Activated CD4-positive, alpha-beta memory T cell treated with anti-CD3 and anti-CD28 coated beads, Interleukin-2, amount 10 ng/mL, durations not matched to agents 7 days and 5 days (primary cell): ENCODE measurements at regions of chr13 and their contacts with region 1.

Region 1: GRCh38 chr13:98570929-98571372 is 6.0 kb downstream of the STK24 start:
- DNase-seq: peak; percentile 63
- H3K4me3 Mint-ChIP-seq: peak overlapping the region; percentile 81
- H3K27ac Mint-ChIP-seq: peak overlapping the region; percentile 95
- H3K4me1 Mint-ChIP-seq: peaks cover 87% of the 10 kb centered on the region
- H3K27me3 Mint-ChIP-seq: no peaks in the 10 kb centered on the region

Region 2: GRCh38 chr13:98476538-98476966 is 94.4 kb before region 1 on chr13:
- CTCF ChIA-PET with region 1: interaction called, 3 read pairs
- POLR2A ChIA-PET with region 1: interaction called, 15 read pairs
- DNase-seq: peak; percentile 94
- H3K4me3 Mint-ChIP-seq: peak overlapping the region; percentile 49
- H3K27ac Mint-ChIP-seq: peak overlapping the region; percentile 83
- H3K4me1 Mint-ChIP-seq: peaks cover 81% of the 10 kb centered on the region
- H3K27me3 Mint-ChIP-seq: no peaks in the 10 kb centered on the region

Region 3: GRCh38 chr13:98509271-98510155 is 61.4 kb before region 1 on chr13:
- CTCF ChIA-PET with region 1: interaction called, 3 read pairs
- POLR2A ChIA-PET with region 1: interaction called, 18 read pairs
- DNase-seq: peak; percentile 69
- H3K4me3 Mint-ChIP-seq: peak overlapping the region; percentile 1
- H3K27ac Mint-ChIP-seq: peak overlapping the region; percentile 87
- H3K4me1 Mint-ChIP-seq: peaks cover 91% of the 10 kb centered on the region
- H3K27me3 Mint-ChIP-seq: no peaks in the 10 kb centered on the region

Region 4: GRCh38 chr13:98517576-98518310 is 53.2 kb before region 1 on chr13:
- CTCF ChIA-PET with region 1: interaction called, 3 read pairs
- POLR2A ChIA-PET with region 1: interaction called, 13 read pairs
- DNase-seq: peak; percentile 62
- H3K4me3 Mint-ChIP-seq: peak overlapping the region; percentile 20
- H3K27ac Mint-ChIP-seq: peak overlapping the region; percentile 75
- H3K4me1 Mint-ChIP-seq: peaks cover 96% of the 10 kb centered on the region
- H3K27me3 Mint-ChIP-seq: no peaks in the 10 kb centered on the region

Region 5: GRCh38 chr13:98549006-98549727 is 21.8 kb before region 1 on chr13:
- CTCF ChIA-PET with region 1: no interaction called
- POLR2A ChIA-PET with region 1: interaction called, 10 read pairs
- DNase-seq: no peak
- H3K4me3 Mint-ChIP-seq: no peak overlapping the region
- H3K27ac Mint-ChIP-seq: peak overlapping the region; percentile 40
- H3K4me1 Mint-ChIP-seq: peaks cover 81% of the 10 kb centered on the region
- H3K27me3 Mint-ChIP-seq: no peaks in the 10 kb centered on the region

Region 6: GRCh38 chr13:98556968-98557631 is 13.9 kb before region 1 on chr13:
- CTCF ChIA-PET with region 1: interaction called, 6 read pairs
- POLR2A ChIA-PET with region 1: interaction called, 26 read pairs
- DNase-seq: no peak
- H3K4me3 Mint-ChIP-seq: peak overlapping the region; percentile 4
- H3K27ac Mint-ChIP-seq: peak overlapping the region; percentile 68
- H3K4me1 Mint-ChIP-seq: peaks cover 76% of the 10 kb centered on the region
- H3K27me3 Mint-ChIP-seq: no peaks in the 10 kb centered on the region

Region 7: GRCh38 chr13:98772794-98773452 is 202.0 kb after region 1 on chr13:
- CTCF ChIA-PET with region 1: no interaction called
- POLR2A ChIA-PET with region 1: no interaction called
- DNase-seq: no peak
- H3K4me3 Mint-ChIP-seq: no peak overlapping the region
- H3K27ac Mint-ChIP-seq: no peak overlapping the region
- H3K4me1 Mint-ChIP-seq: no peaks in the 10 kb centered on the region
- H3K27me3 Mint-ChIP-seq: peaks cover 6% of the 10 kb centered on the region

Region 8: GRCh38 chr13:99694212-99694611 is 1123.3 kb after region 1 on chr13:
- CTCF ChIA-PET with region 1: no interaction called
- POLR2A ChIA-PET with region 1: no interaction called
- DNase-seq: no peak
- H3K4me3 Mint-ChIP-seq: no peak overlapping the region
- H3K27ac Mint-ChIP-seq: no peak overlapping the region
- H3K4me1 Mint-ChIP-seq: no peaks in the 10 kb centered on the region
- H3K27me3 Mint-ChIP-seq: no peaks in the 10 kb centered on the region